SK-N-SH (cell line): ENCODE measurements at regions of chr14 and their contacts with region 1.

Region 1: DNA sequence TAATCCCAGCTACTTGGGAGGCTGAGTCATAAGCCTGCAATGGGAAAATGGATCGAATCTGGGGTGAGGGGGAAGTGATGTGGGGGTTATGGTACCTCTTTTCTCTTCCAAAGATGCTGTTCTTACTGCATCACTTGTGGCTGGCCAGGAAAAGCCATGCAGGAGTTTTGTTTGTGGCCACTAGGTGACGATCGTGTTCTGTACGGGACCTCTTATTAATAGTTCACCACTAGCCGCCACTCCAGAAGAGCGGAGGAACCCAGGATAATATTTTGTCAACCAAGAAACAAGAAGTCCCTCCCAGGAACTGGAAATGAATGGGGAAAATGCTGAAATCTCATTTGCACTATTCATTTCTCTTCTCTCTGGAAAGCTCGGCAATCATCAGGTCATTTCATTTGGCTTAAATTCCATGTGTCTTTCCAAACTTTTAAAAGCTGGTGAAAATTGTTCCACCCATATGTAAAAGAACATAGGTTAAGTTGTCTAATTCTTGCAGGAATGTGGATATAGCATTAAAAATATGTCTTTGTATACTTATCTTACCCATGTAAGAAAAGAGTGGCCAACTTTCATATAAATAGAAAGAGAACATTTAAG is 8.9 kb downstream of the GPR65 start:
- DNase-seq: peak; percentile 53
- H3K4me3 ChIP-seq: peak overlapping the region in 1 of 2 experiments; percentile 4; a peak in 1 of 4 replicates
- H3K27ac ChIP-seq: no peak overlapping the region
- H3K4me1 ChIP-seq: no peaks in the 10 kb centered on the region
- H3K27me3 ChIP-seq: no peaks in the 10 kb centered on the region
- CTCF ChIP-seq: peak; percentile 91
- EP300 ChIP-seq: no peak
- RAD21 ChIP-seq: peak; percentile 85

Region 2: GRCh38 chr14:87944987-87945604 is 68.8 kb before region 1 on chr14:
- CTCF ChIA-PET with region 1: interaction called, 39 read pairs
- POLR2A ChIA-PET with region 1: no interaction called
- DNase-seq: peak; percentile 3
- H3K4me3 ChIP-seq: no peak overlapping the region; a peak in 1 of 4 replicates
- H3K27ac ChIP-seq: no peak overlapping the region
- H3K4me1 ChIP-seq: no peaks in the 10 kb centered on the region
- H3K27me3 ChIP-seq: no peaks in the 10 kb centered on the region
- CTCF ChIP-seq: peak; percentile 80
- EP300 ChIP-seq: no peak
- RAD21 ChIP-seq: peak; percentile 74

Region 3: DNA sequence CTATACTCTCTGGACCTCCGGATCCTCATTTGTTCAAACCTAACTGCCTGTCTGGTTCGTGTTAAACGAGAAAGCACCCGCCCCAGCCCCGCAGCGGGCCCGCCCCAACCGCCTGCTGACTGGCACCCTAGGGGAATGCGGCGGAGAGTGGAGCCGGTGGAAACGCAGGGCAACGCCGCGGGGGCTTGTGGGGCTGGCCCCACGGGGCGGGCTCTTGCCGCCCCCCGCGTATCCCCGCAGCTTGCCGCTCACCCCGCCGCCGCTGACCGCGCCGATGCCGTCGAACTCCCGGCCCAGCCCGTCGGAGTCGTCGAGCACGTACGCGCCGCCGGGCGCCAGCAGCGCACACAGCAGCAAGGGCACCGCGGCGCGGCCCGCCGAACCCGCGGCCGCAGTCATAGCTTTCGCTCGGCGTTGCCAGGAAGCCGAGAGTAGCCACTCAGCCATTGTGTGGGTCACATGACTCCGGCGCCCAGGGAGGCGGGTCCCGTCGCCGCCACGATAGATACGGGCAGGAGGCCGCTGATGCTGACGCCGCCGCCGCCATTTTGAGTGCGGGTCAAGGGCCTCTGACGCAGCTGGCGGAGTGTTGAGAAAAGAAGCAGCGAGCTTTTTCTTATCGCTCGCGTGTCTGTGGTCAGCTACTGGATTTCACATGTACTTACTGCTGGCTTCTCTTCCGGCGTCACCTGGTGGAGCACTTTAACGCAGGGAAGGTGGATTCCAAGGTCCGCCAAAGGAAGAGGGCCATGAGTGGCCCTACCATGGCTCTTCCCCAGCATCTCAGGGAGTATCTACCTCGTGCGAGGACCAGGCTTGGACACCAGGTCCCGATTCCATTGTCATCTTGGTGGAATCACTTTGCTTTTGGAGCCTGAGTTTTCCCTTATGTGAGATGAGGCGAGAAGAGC is 20.9 kb before region 1 on chr14 and contains the start of gene GALC:
- CTCF ChIA-PET with region 1: interaction called, 11 read pairs
- POLR2A ChIA-PET with region 1: interaction called, 4 read pairs
- DNase-seq: peak; percentile 91
- H3K4me3 ChIP-seq: peak within 1 kb of the TSS; percentile 71 to 79
- H3K27ac ChIP-seq: peak within 1 kb of the TSS; percentile 45 to 90; a peak in 3 of 4 replicates
- H3K4me1 ChIP-seq: peaks cover 0 to 7% of the 10 kb centered on the region in 2 experiments; a peak in 1 of 4 replicates
- H3K27me3 ChIP-seq: no peaks in the 10 kb centered on the region
- CTCF ChIP-seq: no peak
- EP300 ChIP-seq: peak in 1 of 2 experiments; percentile 21; a peak in 1 of 4 replicates
- RAD21 ChIP-seq: no peak
- polyA plus RNA-seq, gene GALC: 9.7 and 10.9 TPM in 2 replicates

Region 4: GRCh38 chr14:88049266-88049665 is 35.4 kb after region 1 on chr14:
- CTCF ChIA-PET with region 1: no interaction called
- POLR2A ChIA-PET with region 1: no interaction called
- DNase-seq: no peak
- H3K4me3 ChIP-seq: no peak overlapping the region
- H3K27ac ChIP-seq: no peak overlapping the region
- H3K4me1 ChIP-seq: no peaks in the 10 kb centered on the region
- H3K27me3 ChIP-seq: no peaks in the 10 kb centered on the region
- CTCF ChIP-seq: no peak
- EP300 ChIP-seq: no peak
- RAD21 ChIP-seq: no peak

Region 5: DNA sequence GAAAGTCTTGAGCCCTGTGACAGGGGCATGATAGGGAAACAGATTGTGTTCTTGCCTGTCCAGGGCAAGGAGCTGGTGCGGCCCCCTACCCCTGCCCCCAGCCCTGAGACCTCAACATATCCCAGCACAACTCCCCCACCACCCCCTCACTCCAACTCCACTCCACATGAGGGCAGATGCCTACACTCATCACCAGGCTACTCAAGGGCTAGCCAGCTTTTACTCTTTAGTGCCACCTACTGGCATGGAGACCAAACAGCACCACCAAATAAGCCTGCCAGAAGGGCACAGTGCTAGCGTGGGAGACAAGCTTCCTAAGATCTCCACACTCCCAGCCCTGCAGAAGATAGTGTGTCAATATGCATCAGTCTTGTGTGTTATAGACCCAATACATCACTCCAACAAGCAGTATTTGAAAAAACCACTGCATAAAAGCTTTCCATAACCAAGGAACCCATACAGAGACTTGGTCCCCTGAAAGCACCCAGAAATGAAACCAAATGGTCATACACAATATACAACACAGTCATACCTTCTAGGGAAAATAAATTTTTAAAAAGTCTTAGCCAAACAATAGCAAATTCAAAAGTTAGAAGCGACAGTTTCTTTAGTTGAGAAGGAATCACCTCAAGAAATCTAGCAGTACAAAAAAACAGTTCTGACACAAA is 154.8 kb after region 1 on chr14:
- CTCF ChIA-PET with region 1: interaction called, 86 read pairs
- POLR2A ChIA-PET with region 1: no interaction called
- DNase-seq: peak; percentile 57
- H3K4me3 ChIP-seq: no peak overlapping the region
- H3K27ac ChIP-seq: no peak overlapping the region
- H3K4me1 ChIP-seq: no peaks in the 10 kb centered on the region
- H3K27me3 ChIP-seq: no peaks in the 10 kb centered on the region
- CTCF ChIP-seq: peak; percentile 67
- EP300 ChIP-seq: no peak
- RAD21 ChIP-seq: peak; percentile 62

Region 6: DNA sequence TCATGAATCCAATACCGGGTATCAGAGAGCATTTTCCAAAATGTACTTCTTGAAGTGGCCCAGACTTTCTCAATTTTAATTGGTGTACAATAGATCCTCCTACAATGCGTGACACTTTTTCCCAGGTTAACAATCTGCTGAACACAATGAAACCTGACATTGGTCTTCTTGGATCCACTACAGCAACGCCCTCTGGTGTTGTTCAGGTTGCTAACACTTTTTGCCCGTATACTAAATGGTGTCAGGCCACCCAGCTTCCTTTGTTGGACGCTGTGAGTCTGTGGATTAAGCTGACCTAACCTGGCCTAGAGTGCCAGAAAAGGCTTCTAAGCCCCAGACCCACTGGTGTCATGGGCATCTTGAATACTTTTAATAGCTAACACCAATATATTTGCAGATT is 220.1 kb after region 1 on chr14:
- CTCF ChIA-PET with region 1: interaction called, 10 read pairs
- POLR2A ChIA-PET with region 1: no interaction called
- DNase-seq: peak; percentile 25
- H3K4me3 ChIP-seq: no peak overlapping the region; a peak in 1 of 4 replicates
- H3K27ac ChIP-seq: no peak overlapping the region
- H3K4me1 ChIP-seq: no peaks in the 10 kb centered on the region
- H3K27me3 ChIP-seq: no peaks in the 10 kb centered on the region
- CTCF ChIP-seq: peak; percentile 35
- EP300 ChIP-seq: no peak
- RAD21 ChIP-seq: peak; percentile 41

Region 7: GRCh38 chr14:88380405-88380804 is 366.6 kb after region 1 on chr14:
- CTCF ChIA-PET with region 1: interaction called, 21 read pairs
- POLR2A ChIA-PET with region 1: no interaction called
- DNase-seq: peak; percentile 22
- H3K4me3 ChIP-seq: no peak overlapping the region
- H3K27ac ChIP-seq: no peak overlapping the region
- H3K4me1 ChIP-seq: peaks cover 0 to 3% of the 10 kb centered on the region in 2 experiments; a peak in 1 of 4 replicates
- H3K27me3 ChIP-seq: no peaks in the 10 kb centered on the region
- CTCF ChIP-seq: peak; percentile 44
- EP300 ChIP-seq: no peak
- RAD21 ChIP-seq: peak; percentile 66

Region 8: GRCh38 chr14:88385345-88386101 is 371.7 kb after region 1 on chr14 and contains the start of gene SPATA7:
- CTCF ChIA-PET with region 1: interaction called, 21 read pairs
- POLR2A ChIA-PET with region 1: no interaction called
- DNase-seq: peak; percentile 92
- H3K4me3 ChIP-seq: peak within 1 kb of the TSS; percentile 85 to 97
- H3K27ac ChIP-seq: peak within 1 kb of the TSS; percentile 57 to 85; a peak in 3 of 4 replicates
- H3K4me1 ChIP-seq: peaks cover 0 to 8% of the 10 kb centered on the region in 2 experiments; a peak in 2 of 4 replicates
- H3K27me3 ChIP-seq: no peaks in the 10 kb centered on the region
- CTCF ChIP-seq: 0 out of 2 replicates have a peak, but pooled peaks have one; percentile 8
- EP300 ChIP-seq: peak in 1 of 2 experiments; percentile 19; a peak in 1 of 4 replicates
- RAD21 ChIP-seq: no peak
- polyA plus RNA-seq, gene SPATA7: 3.5 and 4.5 TPM in 2 replicates